ENCODE measurements at regions of chr3 and their contacts with region 1.

Region 1: GRCh38 chr3:58188173-58188564 is 22.6 kb downstream of the DNASE1L3 start:
- DNase-seq: no peak
- H3K4me3 ChIP-seq: no peak overlapping the region
- H3K27me3 ChIP-seq: no peaks in the 10 kb centered on the region; the same call in 1 of the 2 replicates
- CTCF ChIP-seq: no peak

Region 2: GRCh38 chr3:57675530-57675929 is 512.6 kb before region 1 on chr3:
- CTCF ChIA-PET with region 1: no interaction called
- POLR2A ChIA-PET with region 1: no interaction called
- DNase-seq: no peak
- H3K4me3 ChIP-seq: no peak overlapping the region
- H3K27me3 ChIP-seq: no peaks in the 10 kb centered on the region
- CTCF ChIP-seq: no peak

Region 3: GRCh38 chr3:58177747-58178527 is 10.2 kb before region 1 on chr3:
- CTCF ChIA-PET with region 1: interaction called, 53 read pairs
- POLR2A ChIA-PET with region 1: interaction called, 3 read pairs
- DNase-seq: no peak
- H3K4me3 ChIP-seq: peak overlapping the region; percentile 38
- H3K27me3 ChIP-seq: no peaks in the 10 kb centered on the region; the same call in 1 of the 2 replicates
- CTCF ChIP-seq: peak; percentile 95

Region 4: GRCh38 chr3:58200846-58201355 is 12.7 kb after region 1 on chr3:
- CTCF ChIA-PET with region 1: interaction called, 15 read pairs
- POLR2A ChIA-PET with region 1: no interaction called
- DNase-seq: no peak
- H3K4me3 ChIP-seq: no peak overlapping the region
- H3K27me3 ChIP-seq: peaks cover 1% of the 10 kb centered on the region; the same call in 1 of the 2 replicates
- CTCF ChIP-seq: no peak

Region 5: DNA sequence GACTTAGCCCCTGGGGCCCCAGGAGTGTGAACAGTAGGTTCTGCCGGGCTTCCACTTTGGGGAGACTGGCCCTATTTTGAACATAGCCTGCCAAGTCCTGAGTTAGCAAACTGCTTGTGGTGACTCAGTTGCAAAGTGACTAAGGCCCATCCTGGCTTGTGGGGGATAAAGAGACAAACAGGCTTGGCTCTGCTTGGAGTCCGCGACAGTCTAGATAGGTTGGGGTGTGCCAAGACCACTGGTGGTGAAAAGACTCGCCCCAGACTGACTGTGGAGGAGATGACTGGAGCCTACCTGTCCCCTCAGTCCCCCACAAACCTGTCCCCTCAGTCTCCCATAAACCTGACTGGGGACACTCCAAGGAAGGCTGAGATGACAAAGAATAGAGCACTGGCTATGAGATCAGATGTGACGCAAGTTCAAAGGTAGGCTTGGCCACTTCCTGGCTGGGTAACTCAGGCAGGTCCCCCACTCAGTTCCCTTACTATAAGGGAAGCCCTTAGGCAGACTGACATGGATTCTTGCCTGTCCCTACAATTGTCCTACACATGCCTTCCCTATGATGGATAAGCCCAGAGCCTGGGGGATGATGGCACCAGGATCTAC is 18.3 kb after region 1 on chr3:
- CTCF ChIA-PET with region 1: interaction called, 13 read pairs
- POLR2A ChIA-PET with region 1: no interaction called
- DNase-seq: peak; percentile 16
- H3K4me3 ChIP-seq: no peak overlapping the region
- H3K27me3 ChIP-seq: peaks cover 3% of the 10 kb centered on the region; the same call in 1 of the 2 replicates
- CTCF ChIP-seq: no peak

Region 6: GRCh38 chr3:58217209-58217811 is 29.1 kb after region 1 on chr3:
- CTCF ChIA-PET with region 1: interaction called, 69 read pairs
- POLR2A ChIA-PET with region 1: no interaction called
- DNase-seq: no peak
- H3K4me3 ChIP-seq: no peak overlapping the region
- H3K27me3 ChIP-seq: peaks cover 3% of the 10 kb centered on the region
- CTCF ChIP-seq: peak; percentile 86

Region 7: GRCh38 chr3:58299839-58300516 is 111.8 kb after region 1 on chr3:
- CTCF ChIA-PET with region 1: interaction called, 240 read pairs
- POLR2A ChIA-PET with region 1: no interaction called
- DNase-seq: no peak
- H3K4me3 ChIP-seq: no peak overlapping the region
- H3K27me3 ChIP-seq: peaks cover 5% of the 10 kb centered on the region
- CTCF ChIP-seq: peak; percentile 55